ENCODE measurements at regions of chr19 and their contacts with region 1.

Region 1: DNA sequence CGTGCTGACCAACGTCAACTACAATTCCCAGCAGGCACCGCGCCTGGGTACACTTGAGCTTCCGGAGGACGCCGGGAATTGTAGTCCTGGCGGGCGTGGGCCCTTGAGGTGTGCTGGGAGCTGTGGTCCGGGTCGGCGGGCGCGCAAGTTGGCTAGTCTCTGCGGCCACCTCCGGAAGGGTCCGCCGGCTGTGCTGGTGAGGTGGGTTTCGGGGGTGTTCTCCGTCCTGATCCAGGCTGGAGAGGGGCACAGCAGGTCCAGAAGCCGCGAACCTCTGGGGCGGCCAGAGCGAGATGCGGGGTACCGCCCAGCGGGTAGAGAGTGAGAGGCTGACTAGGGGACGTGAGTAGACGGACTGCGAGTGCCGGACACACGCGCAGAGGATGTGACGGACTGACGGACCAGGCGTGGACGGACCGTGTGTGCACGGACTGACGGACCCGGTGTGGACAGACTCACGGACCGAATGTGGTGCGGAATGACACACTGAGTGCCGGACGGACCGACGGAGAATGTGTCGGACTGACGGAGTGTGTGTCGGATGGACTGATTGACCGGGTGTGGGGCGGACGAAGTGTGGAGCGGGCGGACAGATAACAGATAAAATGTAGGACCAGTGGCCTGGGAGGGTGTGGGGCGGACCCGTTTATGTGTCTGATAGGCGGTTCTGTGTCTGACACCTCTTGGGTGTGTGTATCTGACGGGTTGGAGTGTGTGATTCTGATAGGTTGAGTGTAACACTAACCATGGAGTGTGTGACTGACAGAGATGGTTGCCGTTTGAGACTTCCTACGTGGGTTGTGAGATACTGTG is at the start of gene ZSCAN22:
- DNase-seq: peak; percentile 86
- H3K4me3 Mint-ChIP-seq: no peak within 1 kb of the TSS
- H3K27ac Mint-ChIP-seq: no peak within 1 kb of the TSS
- H3K4me1 Mint-ChIP-seq: peaks cover 2% of the 10 kb centered on the region
- H3K27me3 Mint-ChIP-seq: no peaks in the 10 kb centered on the region
- total RNA-seq, gene ZSCAN22: 4.6 and 4.9 TPM in 2 replicates

Region 2: DNA sequence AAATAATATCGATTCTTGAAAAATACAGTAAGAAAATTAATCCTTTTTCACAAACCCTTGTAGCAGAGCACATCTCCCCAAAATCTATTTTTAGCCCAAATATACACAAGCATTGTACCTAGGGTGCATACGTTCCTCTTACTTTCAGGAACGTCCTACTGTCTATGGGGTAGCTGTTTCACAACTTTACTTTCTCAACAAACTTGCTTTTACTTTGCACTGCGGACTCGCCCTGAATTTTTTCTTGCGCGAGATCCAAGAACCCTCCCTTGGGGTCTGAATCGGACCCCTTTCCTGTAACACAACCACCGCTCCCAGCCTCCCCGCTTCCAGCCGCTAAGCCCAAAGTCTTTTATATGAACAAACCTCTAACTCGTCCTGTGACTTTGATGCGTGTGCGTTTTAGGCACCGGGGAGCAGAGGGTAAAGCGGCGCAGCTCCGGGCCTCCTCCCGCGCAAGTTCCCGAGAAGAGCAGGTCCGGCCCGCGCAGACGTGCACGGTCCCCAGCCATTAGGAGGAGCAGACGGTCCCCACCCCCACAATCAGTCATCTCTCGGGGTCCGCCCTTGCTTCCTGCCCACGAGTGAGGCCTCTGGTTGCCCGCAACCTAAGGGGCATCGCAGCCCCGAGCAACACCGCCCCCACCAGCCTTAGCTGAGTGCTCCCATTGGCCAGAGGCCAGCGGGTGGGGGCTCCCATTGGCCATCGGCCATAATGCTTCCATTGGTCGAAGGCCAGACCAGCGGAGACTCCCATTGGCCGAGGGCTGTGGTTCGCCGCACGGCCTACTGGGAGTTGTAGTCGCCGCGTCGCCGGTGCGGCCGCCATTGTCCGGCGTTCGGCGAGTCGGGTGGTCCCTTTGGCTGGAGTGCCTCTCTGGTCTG is 48.7 kb before region 1 on chr19 and contains the start of gene ZNF8:
- intact Hi-C with region 1: loop called (anchors 1 kb)
- DNase-seq: peak; percentile 96
- H3K4me3 Mint-ChIP-seq: peak within 1 kb of the TSS; percentile 94
- H3K27ac Mint-ChIP-seq: peak within 1 kb of the TSS; percentile 94
- H3K4me1 Mint-ChIP-seq: peaks cover 21% of the 10 kb centered on the region
- H3K27me3 Mint-ChIP-seq: no peaks in the 10 kb centered on the region
- total RNA-seq, gene ZNF8: 4.7 and 5.3 TPM in 2 replicates

Region 3: GRCh38 chr19:58294743-58295374 is 32.3 kb before region 1 on chr19:
- intact Hi-C with region 1: no loop called
- DNase-seq: no peak
- H3K4me3 Mint-ChIP-seq: no peak overlapping the region
- H3K27ac Mint-ChIP-seq: no peak overlapping the region
- H3K4me1 Mint-ChIP-seq: no peaks in the 10 kb centered on the region
- H3K27me3 Mint-ChIP-seq: no peaks in the 10 kb centered on the region

Region 4: GRCh38 chr19:58305065-58305931 is 21.8 kb before region 1 on chr19 and contains the start of gene ERVK3-1:
- intact Hi-C with region 1: loop called (anchors 1 kb)
- DNase-seq: peak; percentile 93
- H3K4me3 Mint-ChIP-seq: peak within 1 kb of the TSS; percentile 98
- H3K27ac Mint-ChIP-seq: peak within 1 kb of the TSS; percentile 97
- H3K4me1 Mint-ChIP-seq: peaks cover 37% of the 10 kb centered on the region
- H3K27me3 Mint-ChIP-seq: no peaks in the 10 kb centered on the region
- total RNA-seq, gene ERVK3-1: 64.2 and 65.0 TPM in 2 replicates

Region 5: DNA sequence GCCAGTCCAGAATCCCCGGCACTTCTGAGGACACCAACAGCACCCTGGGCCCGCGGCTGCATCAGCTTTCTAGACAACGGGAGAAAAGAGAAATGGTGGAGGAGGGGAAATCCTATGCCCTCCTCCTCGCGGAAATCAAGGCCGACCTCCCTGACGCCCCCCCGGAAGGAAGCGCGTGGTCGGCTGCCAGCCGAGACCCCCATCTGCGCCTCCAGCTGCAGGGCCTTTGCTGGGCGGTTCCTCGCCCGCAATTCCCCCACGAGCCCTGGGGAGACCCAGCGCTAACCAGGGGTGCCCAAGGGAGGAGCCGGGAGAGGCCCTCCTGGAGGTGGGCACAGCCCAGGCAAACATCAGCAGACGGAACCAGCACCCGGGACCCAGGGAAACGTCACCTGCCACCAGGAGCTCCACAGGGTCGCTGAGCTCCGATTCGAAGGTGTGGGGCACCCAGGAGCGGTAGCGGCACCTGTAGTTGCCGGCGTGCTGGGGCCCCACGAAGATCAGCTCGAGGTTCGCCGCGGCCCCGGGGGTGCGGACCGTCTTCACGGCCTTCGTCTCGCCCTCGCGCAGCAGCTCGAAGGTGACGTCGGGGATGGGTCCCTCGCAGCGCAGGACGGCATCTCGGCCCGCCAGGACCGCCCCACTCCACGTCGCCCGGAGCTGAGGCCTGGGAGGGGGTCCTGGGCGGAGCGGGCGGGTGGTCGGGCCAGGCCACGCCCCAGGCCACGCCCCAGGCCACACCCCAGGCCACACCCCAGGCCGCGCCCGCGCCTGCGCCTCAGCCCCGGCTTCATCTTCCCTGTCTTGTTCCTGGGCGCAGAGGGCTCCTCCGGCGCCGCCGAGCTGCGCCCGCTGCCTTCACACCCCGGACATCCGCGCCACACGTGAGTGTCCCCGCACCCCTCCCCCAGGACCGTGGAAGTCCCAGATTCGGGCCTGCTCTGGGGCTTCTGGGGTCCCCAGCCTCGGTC is 20.1 kb after region 1 on chr19:
- intact Hi-C with region 1: loop called (anchors 1 kb)
- DNase-seq: peak; percentile 60
- H3K4me3 Mint-ChIP-seq: peak overlapping the region; percentile 95
- H3K27ac Mint-ChIP-seq: peak overlapping the region; percentile 71
- H3K4me1 Mint-ChIP-seq: peaks cover 15% of the 10 kb centered on the region
- H3K27me3 Mint-ChIP-seq: no peaks in the 10 kb centered on the region

Region 6: DNA sequence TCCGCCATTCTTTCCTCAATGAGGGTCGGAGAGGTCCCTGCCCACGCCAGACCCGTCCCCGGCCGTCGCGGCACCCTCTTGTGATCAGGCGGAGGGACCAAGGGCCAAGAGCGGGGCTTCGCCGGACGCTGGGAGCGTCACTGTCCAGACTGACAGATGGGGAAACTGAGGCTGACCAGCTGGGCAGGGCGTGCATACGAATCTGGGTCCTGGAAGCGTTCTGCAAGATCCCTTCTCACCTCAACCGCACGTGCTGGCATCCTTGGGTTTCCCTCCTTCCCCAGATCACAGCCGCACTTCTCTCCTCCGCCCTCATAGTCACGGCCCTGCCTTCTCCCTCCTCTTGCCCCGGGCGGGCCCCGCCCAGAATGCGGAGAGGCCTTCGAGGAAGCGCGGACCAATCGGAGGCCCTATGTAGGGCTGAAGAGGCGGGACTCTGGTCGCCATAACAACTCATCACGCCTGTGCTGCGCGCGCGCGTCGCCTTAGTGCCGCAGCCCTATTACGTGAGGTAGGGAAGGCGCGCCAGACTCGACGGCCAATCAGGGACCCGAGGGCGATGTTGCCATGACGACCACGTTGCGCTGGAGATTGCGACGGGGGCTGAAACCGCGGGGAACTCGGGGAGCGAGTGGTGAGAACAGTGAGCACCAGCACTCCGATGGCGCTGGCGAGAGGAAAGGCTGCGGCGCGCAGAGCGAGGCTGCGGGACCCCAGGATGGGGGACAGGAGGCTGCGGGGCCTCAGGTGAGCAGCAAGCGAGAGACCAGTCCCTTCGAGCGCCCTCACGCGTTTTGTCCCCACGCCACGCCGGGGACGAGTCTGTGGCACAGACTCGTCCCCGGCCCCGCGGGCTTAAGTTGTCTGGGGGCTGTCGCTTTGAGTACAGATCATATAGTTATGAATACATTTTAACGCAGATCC is 74.1 kb after region 1 on chr19:
- intact Hi-C with region 1: loop called (anchors 5 kb)
- DNase-seq: peak; percentile 99
- H3K4me3 Mint-ChIP-seq: peak overlapping the region; percentile 80
- H3K27ac Mint-ChIP-seq: peak overlapping the region; percentile 58
- H3K4me1 Mint-ChIP-seq: peaks cover 12% of the 10 kb centered on the region
- H3K27me3 Mint-ChIP-seq: peaks cover 5% of the 10 kb centered on the region